ENCODE measurements at regions of chr5 and their contacts with region 1.

Region 1: DNA sequence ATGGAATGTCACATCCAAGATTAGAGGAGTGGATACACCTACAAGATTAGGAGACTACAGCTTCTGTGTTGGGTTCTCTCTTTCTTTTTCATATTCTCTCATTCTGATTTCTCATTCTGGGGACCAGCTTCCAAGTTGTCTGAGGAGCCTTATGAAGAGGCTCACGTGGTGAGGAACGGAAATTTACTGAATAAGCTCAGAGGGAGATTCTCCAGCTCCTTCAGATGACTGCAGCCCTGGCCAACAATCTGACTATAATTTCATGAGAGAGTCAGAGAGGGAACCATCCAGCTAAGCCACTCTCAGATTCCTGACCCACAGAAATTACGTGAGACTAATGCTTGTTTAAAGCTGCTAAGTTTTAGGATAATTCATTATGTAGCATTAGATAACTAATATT is 27.1 kb upstream of the TENT2 start:
- DNase-seq: no peak
- ATAC-seq: no peak
- H3K4me3 ChIP-seq: no peak overlapping the region
- H3K27ac ChIP-seq: no peak overlapping the region
- H3K4me1 ChIP-seq: peaks cover 9 to 17% of the 10 kb centered on the region in 2 experiments; a peak in 4 of 5 replicates
- H3K27me3 ChIP-seq: no peaks in the 10 kb centered on the region
- CTCF ChIP-seq: no peak
- EP300 ChIP-seq: no peak
- POLR2A ChIP-seq: no peak
- RAD21 ChIP-seq: no peak

Region 2: DNA sequence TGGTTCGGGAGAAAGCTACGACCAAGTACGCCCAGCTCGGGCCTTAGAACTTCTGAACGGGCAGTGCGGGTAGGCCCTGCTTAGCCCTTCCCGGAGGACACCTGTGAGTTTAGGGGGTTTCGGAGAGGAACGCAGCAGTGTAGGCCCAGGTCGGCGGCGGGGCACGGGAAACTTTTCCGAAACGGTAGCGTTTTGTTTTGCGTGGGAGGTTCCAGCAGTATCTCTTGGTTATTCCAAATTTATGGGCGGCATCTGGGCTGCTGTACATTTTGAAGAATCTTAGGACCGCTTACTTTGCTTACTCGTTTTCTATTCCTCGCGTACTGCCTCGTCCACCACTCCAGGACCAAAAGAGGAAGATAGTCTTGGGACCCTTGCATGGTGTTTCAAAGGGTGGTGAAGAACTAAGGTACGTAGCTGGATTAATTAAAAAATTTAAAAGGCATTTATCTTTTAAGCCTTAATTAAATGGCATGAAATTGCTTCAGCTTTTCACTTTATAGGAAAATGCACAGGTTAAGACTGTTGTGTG is 27.6 kb after region 1 on chr5:
- CTCF ChIA-PET with region 1: no interaction called
- POLR2A ChIA-PET with region 1: interaction called, 11 read pairs
- in situ Hi-C with region 1: no loop called
- intact Hi-C with region 1: no loop called
- DNase-seq: no peak
- ATAC-seq: peak; percentile 51
- H3K4me3 ChIP-seq: peak overlapping the region; percentile 90
- H3K27ac ChIP-seq: peak overlapping the region; percentile 96
- H3K4me1 ChIP-seq: 0 out of 5 replicates have a peak, but pooled peaks cover 0 to 3% of the 10 kb centered on the region in 2 experiments
- H3K27me3 ChIP-seq: no peaks in the 10 kb centered on the region
- CTCF ChIP-seq: no peak
- EP300 ChIP-seq: no peak
- POLR2A ChIP-seq: no peak
- RAD21 ChIP-seq: no peak

Measured in K562 (cell line).